Aorta (tissue), 5 donors: ENCODE measurements at regions of chr10 and their contacts with region 1.

Region 1: GRCh38 chr10:112446855-112447711 is at the starts of genes VTI1A and ZDHHC6:
- DNase-seq: peak; percentile 88 to 93
- ATAC-seq: peak; percentile 97
- H3K4me3 ChIP-seq: peak within 1 kb of the TSS; percentile 88 to 99
- H3K27ac ChIP-seq: peak within 1 kb of the TSS; percentile 78 to 82
- H3K4me1 ChIP-seq: peaks cover 0 to 2% of the 10 kb centered on the region in 2 donors
- H3K27me3 ChIP-seq: no peaks in the 10 kb centered on the region
- total RNA-seq, gene VTI1A: 37.4 to 43.1 TPM
- total RNA-seq, gene ZDHHC6: 27.7 to 28.7 TPM

Region 2: GRCh38 chr10:112160834-112161233 is 286.2 kb before region 1 on chr10:
- intact Hi-C with region 1: loop called in 1 of 2 experiments (anchors 10 kb)
- DNase-seq: no peak
- ATAC-seq: no peak
- H3K4me3 ChIP-seq: no peak overlapping the region
- H3K27ac ChIP-seq: no peak overlapping the region
- H3K4me1 ChIP-seq: no peaks in the 10 kb centered on the region
- H3K27me3 ChIP-seq: no peaks in the 10 kb centered on the region

Region 3: GRCh38 chr10:112209684-112210131 is 237.4 kb before region 1 on chr10:
- intact Hi-C with region 1: loop called in 1 of 2 experiments (anchors 2 kb)
- DNase-seq: no peak
- ATAC-seq: no peak
- H3K4me3 ChIP-seq: no peak overlapping the region
- H3K27ac ChIP-seq: peak overlapping the region in 1 of 2 donors; percentile 73
- H3K4me1 ChIP-seq: peaks cover 7 to 9% of the 10 kb centered on the region in 2 donors
- H3K27me3 ChIP-seq: no peaks in the 10 kb centered on the region

Region 4: GRCh38 chr10:112307358-112308124 is 139.5 kb before region 1 on chr10:
- intact Hi-C with region 1: no loop called
- DNase-seq: no peak
- ATAC-seq: no peak
- H3K4me3 ChIP-seq: no peak overlapping the region
- H3K27ac ChIP-seq: peak overlapping the region in 1 of 2 donors; percentile 31
- H3K4me1 ChIP-seq: no peaks in the 10 kb centered on the region
- H3K27me3 ChIP-seq: no peaks in the 10 kb centered on the region